ENCODE measurements at regions of chr2 and their contacts with region 1.

Region 1: DNA sequence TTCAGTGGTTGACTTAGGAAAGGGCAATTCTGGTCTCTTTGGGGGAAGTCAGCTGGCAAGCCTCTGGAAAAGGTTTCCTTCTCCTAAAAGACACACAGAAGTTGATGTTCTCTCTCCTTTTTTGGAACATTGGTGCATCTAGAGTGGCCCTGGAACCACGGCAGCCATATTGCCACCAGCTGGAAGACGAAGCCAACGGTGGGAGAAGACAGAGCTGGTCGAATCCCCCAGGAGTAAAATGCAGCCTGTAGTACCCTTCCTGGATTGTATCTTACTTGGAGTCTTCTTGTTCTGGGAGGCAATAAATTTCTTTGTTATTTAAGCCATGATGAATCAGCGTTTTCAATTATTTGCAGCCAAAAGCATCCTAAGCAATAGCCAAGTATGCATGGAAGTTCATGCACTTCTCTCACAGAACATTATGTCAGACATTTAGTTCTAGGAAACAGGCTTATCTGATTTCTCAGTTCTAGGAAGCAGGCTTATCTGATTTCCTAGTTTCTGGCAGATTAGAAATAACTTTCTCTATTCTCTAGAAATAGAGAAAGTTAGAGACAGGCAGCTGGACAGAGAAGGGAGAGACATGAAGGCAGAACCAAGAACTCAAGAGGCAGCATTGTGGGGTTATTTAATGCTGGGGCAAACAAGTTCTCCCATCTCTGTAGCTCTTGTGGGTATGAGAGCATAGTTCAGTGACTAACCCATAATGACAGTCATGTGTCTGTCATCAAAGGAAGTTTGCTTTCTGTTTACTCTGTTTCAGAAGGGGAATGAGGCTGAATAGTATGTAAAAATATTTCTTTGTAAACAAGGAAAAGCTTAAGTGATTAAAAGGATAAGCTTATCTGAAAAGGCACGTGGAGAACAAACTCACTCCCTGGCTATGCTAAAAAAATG is 40.5 kb upstream of the NABP1 start:
- DNase-seq: no peak
- H3K4me3 Mint-ChIP-seq: peak overlapping the region; percentile 49
- H3K27ac Mint-ChIP-seq: peak overlapping the region; percentile 89
- H3K4me1 Mint-ChIP-seq: peaks cover 58% of the 10 kb centered on the region
- H3K27me3 Mint-ChIP-seq: no peaks in the 10 kb centered on the region

Region 2: GRCh38 chr2:191189112-191189635 is 448.3 kb before region 1 on chr2:
- CTCF ChIA-PET with region 1: no interaction called
- POLR2A ChIA-PET with region 1: no interaction called
- intact Hi-C with region 1: loop called (anchors 1 kb)
- DNase-seq: no peak
- H3K4me3 Mint-ChIP-seq: peak overlapping the region; percentile 27
- H3K27ac Mint-ChIP-seq: peak overlapping the region; percentile 10
- H3K4me1 Mint-ChIP-seq: peaks cover 58% of the 10 kb centered on the region
- H3K27me3 Mint-ChIP-seq: no peaks in the 10 kb centered on the region

Region 3: DNA sequence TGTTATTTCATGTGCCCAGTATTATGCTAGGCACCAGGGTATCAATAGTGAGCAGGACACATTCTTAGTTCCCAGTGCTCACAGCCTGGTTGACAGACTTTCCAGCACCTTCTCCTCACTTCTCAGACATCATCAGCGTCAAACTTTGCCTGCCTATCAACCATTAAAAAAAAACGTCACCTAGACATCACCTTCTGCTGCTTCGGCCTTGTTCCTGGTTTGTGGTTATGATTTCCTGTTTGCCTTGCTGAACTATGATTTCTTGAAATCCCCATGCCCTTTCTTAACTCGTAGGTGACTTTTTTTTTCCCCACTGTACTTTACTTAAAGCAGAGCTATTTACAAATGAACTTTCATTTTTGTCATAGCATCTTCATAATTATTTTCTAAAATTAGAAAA is 19.9 kb before region 1 on chr2:
- CTCF ChIA-PET with region 1: interaction called, 3 read pairs
- POLR2A ChIA-PET with region 1: interaction called, 8 read pairs
- intact Hi-C with region 1: loop called (anchors 1 kb)
- DNase-seq: peak; percentile 61
- H3K4me3 Mint-ChIP-seq: peak overlapping the region; percentile 34
- H3K27ac Mint-ChIP-seq: peak overlapping the region; percentile 94
- H3K4me1 Mint-ChIP-seq: peaks cover 58% of the 10 kb centered on the region
- H3K27me3 Mint-ChIP-seq: no peaks in the 10 kb centered on the region

Region 4: GRCh38 chr2:191650896-191651773 is 13.7 kb after region 1 on chr2:
- CTCF ChIA-PET with region 1: interaction called, 4 read pairs
- POLR2A ChIA-PET with region 1: interaction called, 3 read pairs
- intact Hi-C with region 1: loop called (anchors 1 kb)
- DNase-seq: no peak
- H3K4me3 Mint-ChIP-seq: no peak overlapping the region
- H3K27ac Mint-ChIP-seq: peak overlapping the region; percentile 1
- H3K4me1 Mint-ChIP-seq: peaks cover 9% of the 10 kb centered on the region
- H3K27me3 Mint-ChIP-seq: no peaks in the 10 kb centered on the region